ENCODE measurements at regions of chr6 and their contacts with region 1.

Region 1: GRCh38 chr6:25070547-25071366 is 135.0 kb upstream of the RIPOR2 start:
- DNase-seq: peak; percentile 72
- H3K4me3 ChIP-seq: no peak overlapping the region
- H3K27ac ChIP-seq: no peak overlapping the region
- H3K27me3 ChIP-seq: no peaks in the 10 kb centered on the region
- CTCF ChIP-seq: peak; percentile 94

Region 2: DNA sequence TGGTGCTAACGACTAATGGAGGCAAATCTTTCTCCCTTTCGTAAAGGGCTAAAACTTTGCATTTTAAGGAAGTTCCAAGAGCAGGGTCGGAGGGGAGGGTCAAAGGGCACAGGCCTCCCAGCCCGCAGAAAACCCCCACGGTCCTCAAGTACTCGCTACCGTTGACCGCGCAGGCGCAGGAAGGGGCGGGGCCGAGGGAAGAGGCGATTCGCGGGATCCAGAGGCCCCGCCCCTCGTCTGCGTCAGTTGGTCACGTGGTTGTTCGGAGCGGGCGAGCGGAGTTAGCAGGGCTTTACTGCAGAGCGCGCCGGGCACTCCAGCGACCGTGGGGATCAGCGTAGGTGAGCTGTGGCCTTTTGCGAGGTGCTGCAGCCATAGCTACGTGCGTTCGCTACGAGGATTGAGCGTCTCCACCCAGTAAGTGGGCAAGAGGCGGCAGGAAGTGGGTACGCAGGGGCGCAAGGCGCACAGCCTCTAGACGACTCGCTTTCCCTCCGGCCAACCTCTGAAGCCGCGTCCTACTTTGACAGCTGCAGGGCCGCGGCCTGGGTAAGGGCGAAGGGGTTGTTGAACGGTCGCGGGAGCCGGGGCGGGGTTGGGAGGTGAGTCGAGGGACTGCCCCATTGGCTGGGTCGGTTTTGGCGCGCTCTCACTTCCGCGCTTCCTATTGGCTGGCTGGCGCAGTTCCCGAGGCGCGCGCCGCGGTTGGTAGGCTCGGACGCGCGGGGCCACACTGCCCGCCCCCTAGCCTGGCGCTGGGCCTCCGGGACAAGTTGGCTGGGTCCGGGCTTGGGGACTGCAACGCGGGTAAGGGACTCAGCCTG is 295.8 kb before region 1 on chr6 and contains the start of gene GMNN:
- CTCF ChIA-PET with region 1: interaction called, 12 read pairs
- POLR2A ChIA-PET with region 1: no interaction called
- DNase-seq: peak; percentile 73
- H3K4me3 ChIP-seq: peak within 1 kb of the TSS; percentile 100
- H3K27ac ChIP-seq: peak within 1 kb of the TSS; percentile 91
- H3K27me3 ChIP-seq: no peaks in the 10 kb centered on the region
- CTCF ChIP-seq: no peak
- polyA plus RNA-seq, gene GMNN: 17.4 and 22.0 TPM in 2 replicates

Region 3: GRCh38 chr6:24844903-24845302 is 225.9 kb before region 1 on chr6:
- CTCF ChIA-PET with region 1: interaction called, 11 read pairs
- POLR2A ChIA-PET with region 1: no interaction called
- DNase-seq: no peak
- H3K4me3 ChIP-seq: no peak overlapping the region
- H3K27ac ChIP-seq: no peak overlapping the region
- H3K27me3 ChIP-seq: peaks cover 3% of the 10 kb centered on the region
- CTCF ChIP-seq: no peak

Region 4: DNA sequence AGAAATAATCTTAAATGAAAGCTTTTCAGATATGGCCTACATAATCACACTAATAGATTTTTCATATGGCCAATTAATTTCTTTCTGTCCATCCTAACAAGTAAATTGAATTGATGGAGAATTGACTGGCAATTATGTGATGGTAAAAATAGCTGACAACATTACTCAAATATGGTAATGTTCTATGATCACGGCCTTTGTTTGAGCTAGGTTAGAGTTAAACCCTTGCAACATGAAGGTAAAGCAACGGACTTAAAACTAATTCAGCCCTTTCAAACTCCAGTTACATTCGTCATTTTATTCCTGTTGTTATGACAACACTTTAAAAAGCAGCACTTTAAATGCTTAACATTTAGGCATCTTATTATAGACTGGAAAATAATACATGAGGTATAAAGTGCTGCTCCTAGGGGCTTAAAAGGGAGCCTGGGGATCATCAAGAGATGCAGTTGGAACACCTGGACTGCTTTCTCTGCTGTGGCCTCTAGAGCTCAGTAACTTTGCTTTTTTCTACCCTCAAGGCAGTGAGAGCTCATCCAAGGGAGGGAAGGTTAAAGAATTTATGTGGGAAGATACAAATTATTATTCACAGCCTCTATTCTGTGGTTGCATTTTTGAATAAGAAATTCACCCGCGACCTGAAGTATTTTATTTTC is 181.9 kb before region 1 on chr6:
- CTCF ChIA-PET with region 1: interaction called, 10 read pairs
- POLR2A ChIA-PET with region 1: no interaction called
- DNase-seq: no peak
- H3K4me3 ChIP-seq: no peak overlapping the region
- H3K27ac ChIP-seq: no peak overlapping the region
- H3K27me3 ChIP-seq: no peaks in the 10 kb centered on the region
- CTCF ChIP-seq: no peak

Region 5: GRCh38 chr6:25100288-25100687 is 29.5 kb after region 1 on chr6:
- CTCF ChIA-PET with region 1: interaction called, 13 read pairs
- POLR2A ChIA-PET with region 1: no interaction called
- DNase-seq: no peak
- H3K4me3 ChIP-seq: no peak overlapping the region
- H3K27ac ChIP-seq: no peak overlapping the region
- H3K27me3 ChIP-seq: no peaks in the 10 kb centered on the region
- CTCF ChIP-seq: no peak

Region 6: DNA sequence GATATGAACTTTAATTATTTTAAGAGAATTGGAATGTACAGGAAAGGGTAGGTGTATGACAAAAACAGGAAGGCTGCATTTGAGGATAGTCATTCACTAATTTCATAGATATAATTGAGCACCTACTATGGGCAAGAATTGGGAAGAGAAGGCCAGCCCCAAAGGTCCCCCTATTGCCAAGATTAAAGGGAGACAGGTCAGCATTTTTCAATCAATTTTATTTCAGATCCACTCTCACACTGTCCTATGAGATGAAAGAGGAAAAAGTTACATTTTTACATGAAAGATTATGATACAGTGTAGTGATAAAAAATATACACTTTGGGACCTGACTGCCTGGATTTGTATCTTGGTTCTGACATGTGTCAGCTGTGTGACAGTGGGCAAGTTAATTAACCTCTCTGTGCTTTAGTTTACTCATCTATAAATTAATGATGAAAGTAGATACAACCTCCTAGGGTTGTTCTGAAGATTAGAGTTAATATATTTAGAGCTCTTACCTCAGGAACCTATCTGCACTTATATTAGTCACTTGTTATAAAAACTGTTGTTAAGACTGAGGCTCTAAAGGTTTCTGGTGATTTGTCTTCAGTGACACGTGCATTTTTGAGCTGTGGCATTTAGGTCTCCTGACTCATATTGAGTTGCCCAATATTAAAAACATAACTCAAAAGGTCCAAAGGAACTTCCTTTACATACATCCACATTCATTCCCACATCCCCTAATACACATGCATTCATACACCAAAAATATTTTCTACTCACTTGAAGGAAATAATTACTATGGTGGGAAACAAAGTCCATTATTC is 627.0 kb after region 1 on chr6:
- CTCF ChIA-PET with region 1: no interaction called
- POLR2A ChIA-PET with region 1: no interaction called
- DNase-seq: no peak
- H3K4me3 ChIP-seq: no peak overlapping the region
- H3K27ac ChIP-seq: no peak overlapping the region
- H3K27me3 ChIP-seq: no peaks in the 10 kb centered on the region
- CTCF ChIP-seq: no peak